HAP-1 (cell line): ENCODE measurements at regions of chr12 and their contacts with region 1.

Region 1: DNA sequence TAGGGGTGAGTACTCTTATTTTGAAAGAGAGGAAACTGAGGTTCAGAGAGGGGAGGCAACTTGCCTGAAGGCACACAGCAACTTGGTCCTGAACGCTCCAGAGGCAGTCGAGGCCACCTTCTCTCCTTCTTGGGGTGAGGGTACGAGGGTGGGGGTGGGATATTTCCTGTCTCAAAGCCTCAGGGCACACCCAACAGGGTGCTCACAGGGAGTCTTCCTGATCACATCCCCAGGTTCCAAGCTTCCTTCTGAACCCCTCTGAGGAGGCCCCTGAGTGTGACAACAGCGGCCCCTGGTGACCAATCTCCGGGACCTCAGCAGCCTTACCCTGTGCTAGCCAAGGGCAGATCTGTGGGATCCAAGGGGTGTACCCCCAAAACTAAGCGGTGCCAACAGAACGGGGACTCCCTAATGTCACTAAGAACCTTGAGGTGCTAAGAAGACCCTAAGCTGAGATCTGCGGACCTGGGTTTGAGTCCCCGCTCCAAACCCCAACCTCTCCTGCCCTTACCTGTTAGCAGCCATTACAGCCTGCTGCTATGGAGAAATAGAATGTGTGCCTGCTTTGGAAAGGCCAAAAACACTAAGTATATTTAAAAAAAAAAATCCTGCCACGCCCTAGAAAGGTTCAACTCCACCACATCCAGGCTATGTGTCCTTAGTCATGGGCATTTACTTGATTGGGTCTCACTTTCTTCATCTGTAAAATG is 57.9 kb downstream of the TRPV4 start:
- DNase-seq: peak; percentile 32 to 86
- H3K4me3 ChIP-seq: no peak overlapping the region
- H3K4me1 ChIP-seq: no peaks in the 10 kb centered on the region
- H3K27me3 ChIP-seq: no peaks in the 10 kb centered on the region

Region 2: DNA sequence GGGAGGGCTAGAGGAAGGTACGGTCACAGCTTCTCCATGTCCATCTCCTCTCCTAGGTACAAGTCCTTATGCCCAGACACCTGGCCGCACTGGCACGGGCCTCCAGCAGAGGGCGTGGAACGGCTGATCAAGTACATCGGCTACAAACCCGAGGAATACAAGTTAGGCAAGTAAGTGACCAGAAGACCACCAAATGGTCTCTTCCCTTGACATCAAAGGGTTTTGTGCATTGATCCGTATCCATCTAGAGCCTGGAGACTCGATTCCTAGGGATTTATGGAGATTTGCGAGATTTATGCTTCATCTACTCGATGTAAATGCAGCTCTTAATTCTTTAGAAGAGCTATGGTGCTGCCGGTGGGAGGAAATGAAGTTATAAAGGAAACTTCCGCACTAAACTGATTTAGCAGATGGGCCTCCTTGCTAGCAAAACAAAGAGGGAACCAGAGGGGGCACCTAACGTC is 342.5 kb before region 1 on chr12:
- in situ Hi-C with region 1: loop called (anchors 10 kb)
- DNase-seq: peak; percentile 62 to 92
- H3K4me3 ChIP-seq: no peak overlapping the region
- H3K4me1 ChIP-seq: no peaks in the 10 kb centered on the region
- H3K27me3 ChIP-seq: no peaks in the 10 kb centered on the region

Region 3: DNA sequence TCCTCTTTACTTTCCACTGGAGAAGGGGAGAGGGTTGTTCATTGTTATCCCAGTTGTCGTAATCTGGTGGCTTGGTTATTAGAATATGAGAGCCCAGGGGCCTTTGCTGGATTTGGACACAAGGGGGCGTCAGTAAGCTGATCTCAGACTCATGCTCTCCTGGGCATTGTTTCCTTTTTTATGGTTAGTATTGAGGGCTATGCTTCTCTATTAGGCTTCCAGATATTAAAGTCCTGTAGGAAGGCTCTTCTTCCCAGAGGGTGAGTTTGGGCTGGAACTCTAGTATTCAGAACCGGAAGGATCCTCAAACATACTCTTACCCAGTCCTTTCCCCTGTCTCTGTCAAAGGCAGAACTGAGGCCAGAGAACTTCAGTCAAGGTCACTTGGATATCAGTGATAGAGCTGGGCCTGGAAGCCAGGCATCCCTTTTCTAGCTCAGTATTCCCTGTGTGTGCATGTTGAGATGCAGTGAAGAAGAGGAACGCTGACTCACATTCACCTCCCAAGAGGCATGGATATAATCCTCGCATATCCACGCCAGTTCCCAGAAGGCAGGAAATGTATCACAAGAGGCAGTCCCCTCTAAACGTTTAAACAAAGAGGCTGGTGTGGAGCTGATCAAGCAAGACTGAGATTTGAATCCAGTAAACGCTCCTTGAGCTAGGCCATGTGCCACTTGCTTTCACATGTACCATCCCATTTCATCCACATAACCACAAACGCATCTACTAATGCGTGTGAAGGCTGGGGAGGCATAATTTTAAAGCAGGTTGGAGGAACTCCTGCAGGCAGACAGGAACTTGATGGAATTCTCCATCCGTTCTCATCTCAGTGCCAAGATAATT is 256.3 kb before region 1 on chr12:
- in situ Hi-C with region 1: loop called (anchors 5 kb)
- DNase-seq: peak; percentile 40 to 83
- H3K4me3 ChIP-seq: no peak overlapping the region
- H3K4me1 ChIP-seq: no peaks in the 10 kb centered on the region
- H3K27me3 ChIP-seq: no peaks in the 10 kb centered on the region

Region 4: DNA sequence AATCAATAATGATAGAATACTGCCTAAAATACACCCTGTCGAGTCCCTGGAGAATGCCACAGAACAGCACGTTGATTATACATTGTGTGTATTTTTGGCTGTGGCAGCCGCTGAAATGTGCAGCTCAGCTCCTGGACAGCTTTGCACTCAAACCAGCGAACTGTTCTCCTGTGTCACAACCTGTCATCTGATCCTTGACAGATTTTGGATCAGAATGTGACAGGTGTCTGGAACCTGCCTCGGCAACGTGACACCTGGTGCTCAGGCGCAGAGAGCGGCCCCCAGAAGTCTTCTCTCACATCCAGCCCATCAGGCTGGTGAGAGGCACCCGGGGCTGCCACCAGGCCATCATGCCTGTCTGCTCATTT is 182.4 kb before region 1 on chr12:
- in situ Hi-C with region 1: loop called (anchors 5 kb)
- DNase-seq: no peak
- H3K4me3 ChIP-seq: no peak overlapping the region
- H3K4me1 ChIP-seq: peaks cover under 1% of the 10 kb centered on the region; the same call in 1 of the 2 replicates
- H3K27me3 ChIP-seq: no peaks in the 10 kb centered on the region